ENCODE measurements at regions of chr2 and their contacts with region 1.

Region 1: GRCh38 chr2:43226558-43226954 is at the start of gene ZFP36L2:
- DNase-seq: peak; percentile 91
- H3K4me3 ChIP-seq: peak within 1 kb of the TSS; percentile 71 to 93 (median 90)
- H3K27ac ChIP-seq: peak within 1 kb of the TSS; percentile 88
- H3K4me1 ChIP-seq: peaks cover 31% of the 10 kb centered on the region
- H3K27me3 ChIP-seq: no peaks in the 10 kb centered on the region
- CTCF ChIP-seq: no peak
- POLR2A ChIP-seq: peak; percentile 99
- total RNA-seq, gene ZFP36L2: 73.4 and 75.9 TPM in 2 replicates

Region 2: DNA sequence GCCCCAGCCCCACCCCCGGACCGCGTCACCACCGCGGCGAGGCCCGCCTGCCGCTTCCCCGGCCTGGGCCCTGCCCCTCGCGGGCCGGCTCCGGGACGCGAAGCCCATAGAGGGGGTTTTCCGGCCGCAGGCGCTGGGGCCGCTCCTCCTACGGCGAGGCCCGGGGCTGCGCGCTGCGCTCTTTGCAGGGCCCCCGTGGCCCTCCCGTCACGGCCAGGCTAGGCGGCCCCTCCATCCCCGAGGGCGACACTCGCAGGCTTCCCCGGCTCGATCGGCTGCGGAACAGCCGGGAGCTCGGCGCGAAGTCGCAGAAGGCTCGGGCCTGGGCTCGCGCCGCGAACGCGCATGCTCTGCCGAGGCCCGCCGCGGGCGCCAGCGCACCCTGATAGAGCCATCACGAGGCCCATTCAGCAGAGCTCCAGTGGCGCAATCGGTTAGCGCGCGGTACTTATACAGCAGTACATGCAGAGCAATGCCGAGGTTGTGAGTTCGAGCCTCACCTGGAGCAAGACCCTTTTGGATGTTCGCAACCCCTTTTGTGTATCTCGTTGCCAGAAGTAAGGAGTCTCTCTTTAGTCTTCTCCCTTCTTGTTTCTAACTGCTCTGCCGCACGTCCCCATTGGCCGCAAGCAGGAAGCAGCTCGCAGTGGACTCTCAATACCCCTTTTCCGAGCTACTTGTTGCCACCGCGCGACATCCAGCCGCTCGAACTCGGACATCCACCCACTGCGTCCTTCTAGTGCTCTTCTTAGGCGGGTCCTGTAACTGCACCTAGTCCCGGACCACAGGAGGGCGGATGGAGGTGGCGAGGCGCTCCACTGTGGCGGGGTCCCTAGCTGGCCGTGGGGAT is 416.2 kb before region 1 on chr2:
- CTCF ChIA-PET with region 1: no interaction called
- POLR2A ChIA-PET with region 1: no interaction called
- dilution Hi-C with region 1: no loop called
- intact Hi-C with region 1: loop called (anchors 5 kb)
- DNase-seq: peak; percentile 98
- H3K4me3 ChIP-seq: peak overlapping the region; percentile 9 to 44 (median 35)
- H3K27ac ChIP-seq: peak overlapping the region; percentile 85
- H3K4me1 ChIP-seq: peaks cover 11% of the 10 kb centered on the region
- H3K27me3 ChIP-seq: peaks cover 0 to under 1% of the 10 kb centered on the region in 2 experiments
- CTCF ChIP-seq: no peak
- POLR2A ChIP-seq: peak; percentile 91

Region 3: GRCh38 chr2:42944779-42945415 is 281.7 kb before region 1 on chr2:
- CTCF ChIA-PET with region 1: interaction called, 75 read pairs
- POLR2A ChIA-PET with region 1: interaction called, 5 read pairs
- dilution Hi-C with region 1: no loop called
- intact Hi-C with region 1: loop called (anchors 1 kb)
- DNase-seq: no peak
- H3K4me3 ChIP-seq: no peak overlapping the region
- H3K27ac ChIP-seq: no peak overlapping the region
- H3K4me1 ChIP-seq: no peaks in the 10 kb centered on the region
- H3K27me3 ChIP-seq: no peaks in the 10 kb centered on the region
- CTCF ChIP-seq: no peak
- POLR2A ChIP-seq: no peak

Region 4: DNA sequence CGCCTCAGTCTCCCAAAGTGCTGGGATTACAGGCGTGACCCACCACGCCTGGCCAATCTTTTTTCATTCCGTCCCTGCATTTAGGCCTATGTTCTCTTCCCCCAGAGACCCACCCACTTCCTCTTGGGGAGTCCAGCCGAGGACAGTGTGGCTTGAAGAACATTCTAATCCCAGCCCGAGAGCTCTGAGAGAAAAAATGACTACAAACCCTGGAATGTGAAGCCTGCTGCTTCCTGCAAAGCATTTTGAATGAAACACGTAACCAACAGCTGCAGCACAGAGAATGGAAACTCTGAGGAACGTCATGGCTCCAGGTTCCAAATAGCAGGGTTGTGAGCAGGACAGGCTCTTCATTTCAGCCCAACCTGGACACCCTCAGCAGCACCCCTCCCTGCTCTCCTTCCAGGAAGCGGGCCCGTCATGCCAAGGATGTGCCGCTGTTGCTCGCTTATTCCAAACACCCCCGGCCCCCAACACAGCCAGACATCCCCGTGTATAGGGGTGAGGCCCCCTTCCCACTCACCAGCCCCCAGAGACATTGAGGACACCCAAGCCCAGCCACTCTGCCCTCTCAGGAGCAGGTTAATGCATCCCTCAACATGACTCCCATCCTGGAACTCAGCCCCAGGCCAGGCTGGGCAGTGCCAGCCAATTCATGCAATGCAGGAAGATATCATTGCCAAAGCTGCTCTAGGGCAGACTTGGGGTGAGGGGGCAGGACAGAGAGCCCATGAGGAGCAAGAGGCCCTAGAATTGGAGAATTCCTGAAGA is 139.9 kb before region 1 on chr2:
- CTCF ChIA-PET with region 1: interaction called, 4 read pairs
- POLR2A ChIA-PET with region 1: interaction called, 4 read pairs
- dilution Hi-C with region 1: no loop called
- intact Hi-C with region 1: loop called (anchors 1 kb)
- DNase-seq: peak; percentile 96
- H3K4me3 ChIP-seq: no peak overlapping the region
- H3K27ac ChIP-seq: peak overlapping the region; percentile 87
- H3K4me1 ChIP-seq: peaks cover 44% of the 10 kb centered on the region
- H3K27me3 ChIP-seq: no peaks in the 10 kb centered on the region
- CTCF ChIP-seq: no peak
- POLR2A ChIP-seq: peak; percentile 17

Region 5: DNA sequence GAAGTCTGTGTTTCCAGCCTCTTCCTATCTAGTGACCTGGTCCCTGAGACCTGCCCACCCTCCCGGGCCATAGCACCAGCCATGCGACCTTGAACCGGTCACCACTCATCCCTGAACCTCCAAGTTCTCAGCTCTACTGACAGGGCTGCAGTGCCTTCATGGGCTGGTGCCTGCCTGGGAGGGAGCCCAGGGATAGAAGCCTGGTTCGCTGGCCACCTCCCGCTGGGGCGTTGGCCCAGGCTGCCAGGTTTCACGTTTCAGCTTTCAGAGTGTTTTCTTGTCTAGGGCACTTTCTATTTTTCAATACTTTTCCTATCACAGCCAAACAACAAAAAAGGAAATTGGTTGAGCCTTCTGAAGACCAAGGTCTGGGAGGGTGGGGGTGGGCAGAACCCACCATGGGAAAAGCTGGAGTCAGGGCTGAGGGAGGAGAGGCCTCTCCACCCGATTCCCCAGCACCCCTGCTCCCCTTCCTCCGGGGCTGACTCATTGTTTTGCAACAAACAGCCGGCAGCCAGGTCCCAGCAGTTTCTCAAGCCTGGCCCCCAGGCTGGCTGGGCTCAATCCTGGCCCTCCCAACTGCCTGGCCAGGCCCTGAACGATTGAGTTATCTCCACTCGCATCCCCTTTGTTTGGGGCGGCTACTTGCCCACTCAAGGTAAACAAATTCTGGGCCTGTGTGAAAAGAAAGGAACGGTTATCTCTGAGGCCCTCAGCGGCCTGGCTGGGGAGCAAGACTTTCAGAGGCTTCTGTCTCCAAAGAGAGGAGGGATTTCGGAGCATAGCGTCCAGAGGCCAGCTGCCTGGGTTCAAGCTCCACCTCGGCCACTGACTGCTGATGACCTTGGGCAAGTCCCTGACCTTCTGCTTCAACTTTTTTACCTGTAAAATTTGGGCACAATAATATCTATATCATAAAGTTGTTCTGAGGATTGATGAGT is 47.7 kb before region 1 on chr2:
- CTCF ChIA-PET with region 1: interaction called, 22 read pairs
- POLR2A ChIA-PET with region 1: interaction called, 16 read pairs
- dilution Hi-C with region 1: loop called (anchors 10 kb)
- intact Hi-C with region 1: loop called (anchors 1 kb)
- DNase-seq: peak; percentile 97
- H3K4me3 ChIP-seq: no peak overlapping the region
- H3K27ac ChIP-seq: peak overlapping the region; percentile 92
- H3K4me1 ChIP-seq: peaks cover 46% of the 10 kb centered on the region
- H3K27me3 ChIP-seq: no peaks in the 10 kb centered on the region
- CTCF ChIP-seq: no peak
- POLR2A ChIP-seq: no peak

Region 6: GRCh38 chr2:43576981-43577892 is 350.7 kb after region 1 on chr2:
- CTCF ChIA-PET with region 1: interaction called, 10 read pairs
- POLR2A ChIA-PET with region 1: no interaction called
- dilution Hi-C with region 1: no loop called
- intact Hi-C with region 1: no loop called
- DNase-seq: peak; percentile 61
- H3K4me3 ChIP-seq: no peak overlapping the region
- H3K27ac ChIP-seq: no peak overlapping the region
- H3K4me1 ChIP-seq: no peaks in the 10 kb centered on the region
- H3K27me3 ChIP-seq: no peaks in the 10 kb centered on the region
- CTCF ChIP-seq: peak; percentile 60 to 66
- POLR2A ChIP-seq: no peak